Prostate gland (tissue), 2 donors: ENCODE measurements at regions of chr1 and their contacts with region 1.

Region 1: GRCh38 chr1:75724472-75725022 is at the start of gene ACADM:
- DNase-seq: peak; percentile 79
- H3K4me3 ChIP-seq: peak within 1 kb of the TSS; percentile 52 to 83
- H3K27ac ChIP-seq: peak within 1 kb of the TSS; percentile 88 to 90
- H3K4me1 ChIP-seq: no peaks in the 10 kb centered on the region
- H3K27me3 ChIP-seq: no peaks in the 10 kb centered on the region
- CTCF ChIP-seq: no peak
- POLR2A ChIP-seq: peak; percentile 63
- total RNA-seq, gene ACADM: 45.4 to 49.4 TPM

Region 2: GRCh38 chr1:75785983-75786853 is 61.7 kb after region 1 on chr1 and contains the start of gene RABGGTB:
- intact Hi-C with region 1: loop called (anchors 5 kb)
- DNase-seq: peak; percentile 91
- H3K4me3 ChIP-seq: peak within 1 kb of the TSS; percentile 55 to 68
- H3K27ac ChIP-seq: peak within 1 kb of the TSS; percentile 71 to 72
- H3K4me1 ChIP-seq: no peaks in the 10 kb centered on the region
- H3K27me3 ChIP-seq: no peaks in the 10 kb centered on the region
- CTCF ChIP-seq: peak in 1 of 4 experiments; percentile 6
- POLR2A ChIP-seq: peak; percentile 82
- total RNA-seq, gene RABGGTB: 34.4 to 42.8 TPM

Region 3: GRCh38 chr1:76006234-76006633 is 281.7 kb after region 1 on chr1:
- intact Hi-C with region 1: no loop called
- DNase-seq: no peak
- H3K4me3 ChIP-seq: no peak overlapping the region
- H3K27ac ChIP-seq: no peak overlapping the region
- H3K4me1 ChIP-seq: no peaks in the 10 kb centered on the region
- H3K27me3 ChIP-seq: no peaks in the 10 kb centered on the region
- CTCF ChIP-seq: no peak
- POLR2A ChIP-seq: no peak